ENCODE measurements at regions of chr12 and their contacts with region 1.

Region 1: GRCh38 chr12:6700646-6701051 is at the start of gene PIANP:
- DNase-seq: peak in 4 of 5 donors; percentile 25 to 75 (median 61)
- H3K4me3 ChIP-seq: peak within 1 kb of the TSS; percentile 62
- H3K27ac ChIP-seq: no peak within 1 kb of the TSS
- H3K4me1 ChIP-seq: peaks cover 2% of the 10 kb centered on the region
- H3K27me3 ChIP-seq: no peaks in the 10 kb centered on the region
- CTCF ChIP-seq: no peak
- EP300 ChIP-seq: no peak
- POLR2A ChIP-seq: no peak
- total RNA-seq, gene PIANP: 0.11 to 3.1 (median 0.85) TPM in 6 of 7 donors, not detected in the other

Region 2: GRCh38 chr12:5945071-5946008 is 755.3 kb before region 1 on chr12 and contains the start of gene ANO2:
- intact Hi-C with region 1: no loop called
- DNase-seq: no peak
- H3K4me3 ChIP-seq: no peak within 1 kb of the TSS
- H3K27ac ChIP-seq: no peak within 1 kb of the TSS
- H3K4me1 ChIP-seq: no peaks in the 10 kb centered on the region
- H3K27me3 ChIP-seq: no peaks in the 10 kb centered on the region
- CTCF ChIP-seq: no peak
- EP300 ChIP-seq: no peak
- POLR2A ChIP-seq: no peak
- total RNA-seq, gene ANO2: 3.0 to 6.7 (median 4.8) TPM

Region 3: GRCh38 chr12:6620137-6620884 is 80.3 kb before region 1 on chr12:
- intact Hi-C with region 1: no loop called
- DNase-seq: peak in 1 of 5 donors; percentile 30
- H3K4me3 ChIP-seq: no peak overlapping the region
- H3K27ac ChIP-seq: no peak overlapping the region
- H3K4me1 ChIP-seq: no peaks in the 10 kb centered on the region
- H3K27me3 ChIP-seq: no peaks in the 10 kb centered on the region
- CTCF ChIP-seq: no peak
- EP300 ChIP-seq: no peak
- POLR2A ChIP-seq: no peak

Region 4: DNA sequence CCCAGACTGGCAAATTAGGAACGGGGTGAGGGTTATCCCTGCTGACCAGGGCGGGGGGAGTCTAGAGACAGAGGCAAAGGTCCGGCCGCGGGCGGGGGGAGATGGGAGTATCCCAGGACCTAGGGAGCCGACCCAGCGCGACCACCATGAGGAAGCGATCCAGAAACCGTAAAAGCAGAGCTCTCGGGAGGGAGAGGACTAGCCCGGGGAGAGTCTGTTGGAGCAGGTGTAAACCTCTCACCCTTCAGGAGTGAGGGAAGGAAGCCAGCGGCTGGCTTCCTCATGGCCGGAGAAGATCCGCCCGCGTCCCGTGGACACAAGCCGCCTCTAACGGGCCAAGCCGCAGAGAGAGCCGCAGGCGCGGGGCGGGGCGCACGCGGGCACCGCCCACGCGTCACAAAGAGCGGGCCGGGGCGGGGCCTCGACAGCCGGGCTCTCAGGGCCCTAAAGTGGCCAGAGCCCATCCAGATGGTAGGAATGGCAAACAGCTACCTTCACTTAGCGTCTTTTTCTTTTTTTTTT is 53.5 kb before region 1 on chr12 and contains the start of gene ACRBP:
- intact Hi-C with region 1: loop called in 1 of 4 experiments (anchors 10 kb)
- DNase-seq: peak; percentile 71 to 85 (median 78)
- H3K4me3 ChIP-seq: peak within 1 kb of the TSS; percentile 42
- H3K27ac ChIP-seq: no peak within 1 kb of the TSS
- H3K4me1 ChIP-seq: no peaks in the 10 kb centered on the region
- H3K27me3 ChIP-seq: no peaks in the 10 kb centered on the region
- CTCF ChIP-seq: no peak
- EP300 ChIP-seq: no peak
- POLR2A ChIP-seq: no peak
- total RNA-seq, gene ACRBP: 0.30 to 2.5 (median 0.92) TPM